ENCODE measurements at regions of chr6 and their contacts with region 1.

Region 1: GRCh38 chr6:129730477-129731165 is 20.6 kb upstream of the ARHGAP18 start:
- DNase-seq: peak; percentile 54
- ATAC-seq: peak; percentile 72
- H3K4me3 Mint-ChIP-seq: no peak overlapping the region
- H3K27ac Mint-ChIP-seq: peak overlapping the region; percentile 74
- H3K4me1 Mint-ChIP-seq: peaks cover 17% of the 10 kb centered on the region
- H3K27me3 Mint-ChIP-seq: no peaks in the 10 kb centered on the region

Region 2: DNA sequence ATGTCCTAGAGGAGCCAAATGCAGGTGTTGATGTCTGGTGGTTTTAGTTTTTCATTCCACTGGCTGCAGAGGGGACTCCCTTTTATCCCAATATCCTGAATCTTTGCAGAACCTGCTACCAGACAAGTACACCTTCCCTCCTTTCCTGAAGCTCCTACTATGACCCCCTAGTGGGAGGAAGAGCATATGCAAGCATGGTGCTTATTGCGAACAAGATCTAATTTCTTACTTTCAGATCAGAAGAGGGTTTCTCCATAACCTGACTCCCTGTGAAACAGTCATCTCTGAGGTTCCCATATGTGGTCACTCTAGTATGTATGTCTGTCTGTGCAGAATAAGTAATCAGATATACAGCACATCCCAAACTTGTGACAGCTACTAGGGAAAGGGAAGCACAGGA is 297.9 kb before region 1 on chr6:
- CTCF ChIA-PET with region 1: no interaction called
- DNase-seq: no peak
- ATAC-seq: no peak
- H3K4me3 Mint-ChIP-seq: no peak overlapping the region
- H3K27ac Mint-ChIP-seq: no peak overlapping the region
- H3K4me1 Mint-ChIP-seq: no peaks in the 10 kb centered on the region
- H3K27me3 Mint-ChIP-seq: peaks cover 13% of the 10 kb centered on the region

Region 3: GRCh38 chr6:129598244-129599187 is 132.1 kb before region 1 on chr6:
- CTCF ChIA-PET with region 1: interaction called, 111 read pairs
- DNase-seq: no peak
- ATAC-seq: peak; percentile 76
- H3K4me3 Mint-ChIP-seq: no peak overlapping the region
- H3K27ac Mint-ChIP-seq: peak overlapping the region; percentile 14
- H3K4me1 Mint-ChIP-seq: peaks cover 4% of the 10 kb centered on the region
- H3K27me3 Mint-ChIP-seq: no peaks in the 10 kb centered on the region

Region 4: GRCh38 chr6:129672881-129673643 is 57.6 kb before region 1 on chr6:
- CTCF ChIA-PET with region 1: interaction called, 17 read pairs
- DNase-seq: peak; percentile 62
- ATAC-seq: peak; percentile 69
- H3K4me3 Mint-ChIP-seq: peak overlapping the region; percentile 71
- H3K27ac Mint-ChIP-seq: peak overlapping the region; percentile 95
- H3K4me1 Mint-ChIP-seq: peaks cover 55% of the 10 kb centered on the region
- H3K27me3 Mint-ChIP-seq: no peaks in the 10 kb centered on the region

Region 5: GRCh38 chr6:129717277-129717676 is 13.3 kb before region 1 on chr6:
- CTCF ChIA-PET with region 1: interaction called, 60 read pairs
- DNase-seq: no peak
- ATAC-seq: no peak
- H3K4me3 Mint-ChIP-seq: no peak overlapping the region
- H3K27ac Mint-ChIP-seq: no peak overlapping the region
- H3K4me1 Mint-ChIP-seq: peaks cover 14% of the 10 kb centered on the region
- H3K27me3 Mint-ChIP-seq: no peaks in the 10 kb centered on the region

Region 6: GRCh38 chr6:129755787-129756186 is 25.2 kb after region 1 on chr6:
- CTCF ChIA-PET with region 1: no interaction called
- DNase-seq: no peak
- ATAC-seq: no peak
- H3K4me3 Mint-ChIP-seq: no peak overlapping the region
- H3K27ac Mint-ChIP-seq: no peak overlapping the region
- H3K4me1 Mint-ChIP-seq: peaks cover 10% of the 10 kb centered on the region
- H3K27me3 Mint-ChIP-seq: peaks cover 7% of the 10 kb centered on the region

Region 7: DNA sequence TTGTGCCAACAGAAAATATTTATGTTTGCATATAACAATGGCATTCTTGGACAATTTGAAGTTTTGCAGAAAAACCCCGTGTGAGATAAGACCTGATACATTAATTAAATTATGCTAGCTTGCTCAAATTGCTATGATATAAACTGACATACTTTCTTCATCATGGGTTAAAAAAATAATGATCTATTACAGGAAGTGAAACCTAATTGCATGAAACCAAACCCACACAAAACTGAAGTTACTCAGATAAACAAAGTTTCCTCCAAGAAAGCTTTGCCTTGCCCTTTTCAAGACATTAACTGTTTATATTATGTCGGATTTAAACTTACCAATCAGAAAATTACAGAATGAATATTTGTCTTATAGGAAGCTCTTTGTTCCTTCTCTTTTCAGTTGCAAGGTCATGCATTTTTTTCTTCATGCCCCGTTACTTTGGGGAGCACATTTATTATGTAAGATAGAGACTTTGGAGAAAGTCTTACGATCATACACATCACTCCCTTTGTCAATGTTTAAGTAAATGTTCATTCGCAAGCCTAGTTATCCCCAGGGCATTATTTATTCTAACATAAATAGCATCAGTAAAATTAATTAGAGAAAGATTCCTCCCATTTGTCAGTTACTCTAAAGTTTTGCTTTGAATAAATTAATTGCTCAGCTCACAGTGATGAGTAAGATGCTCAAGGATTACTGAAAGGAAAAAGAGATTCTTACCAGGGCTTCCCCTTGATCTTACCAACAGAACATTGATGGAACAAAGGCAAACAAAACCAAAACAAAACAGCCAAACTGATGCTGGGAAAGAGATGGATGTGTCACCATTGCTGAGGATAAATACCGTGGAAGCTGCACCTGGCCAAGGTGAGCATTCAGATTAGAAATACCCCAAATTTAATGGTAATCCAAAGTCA is 145.2 kb after region 1 on chr6:
- CTCF ChIA-PET with region 1: no interaction called
- DNase-seq: no peak
- ATAC-seq: peak; percentile 57
- H3K4me3 Mint-ChIP-seq: peak overlapping the region; percentile 5
- H3K27ac Mint-ChIP-seq: peak overlapping the region; percentile 52
- H3K4me1 Mint-ChIP-seq: peaks cover 18% of the 10 kb centered on the region
- H3K27me3 Mint-ChIP-seq: no peaks in the 10 kb centered on the region

Region 8: GRCh38 chr6:130293800-130294199 is 563.2 kb after region 1 on chr6:
- CTCF ChIA-PET with region 1: no interaction called
- DNase-seq: peak; percentile 64
- ATAC-seq: peak; percentile 66
- H3K4me3 Mint-ChIP-seq: no peak overlapping the region
- H3K27ac Mint-ChIP-seq: no peak overlapping the region
- H3K4me1 Mint-ChIP-seq: no peaks in the 10 kb centered on the region
- H3K27me3 Mint-ChIP-seq: no peaks in the 10 kb centered on the region